ENCODE measurements at regions of chr3 and their contacts with region 1.

Region 1: GRCh38 chr3:52845691-52846431 is 11.0 kb upstream of the MUSTN1 start:
- DNase-seq: peak in 1 of 2 donors; percentile 41
- ATAC-seq: peak in 5 of 8 donors; percentile 11 to 53 (median 25)
- H3K4me3 ChIP-seq: peak overlapping the region in 4 of 10 donors; percentile 7 to 15 (median 12)
- H3K27ac ChIP-seq: peak overlapping the region; percentile 48 to 84 (median 73)
- H3K4me1 ChIP-seq: peaks cover 22 to 64% (median 47%) of the 10 kb centered on the region in 9 donors
- H3K27me3 ChIP-seq: no peaks in the 10 kb centered on the region
- CTCF ChIP-seq: peak; percentile 6 to 61 (median 51)

Region 2: DNA sequence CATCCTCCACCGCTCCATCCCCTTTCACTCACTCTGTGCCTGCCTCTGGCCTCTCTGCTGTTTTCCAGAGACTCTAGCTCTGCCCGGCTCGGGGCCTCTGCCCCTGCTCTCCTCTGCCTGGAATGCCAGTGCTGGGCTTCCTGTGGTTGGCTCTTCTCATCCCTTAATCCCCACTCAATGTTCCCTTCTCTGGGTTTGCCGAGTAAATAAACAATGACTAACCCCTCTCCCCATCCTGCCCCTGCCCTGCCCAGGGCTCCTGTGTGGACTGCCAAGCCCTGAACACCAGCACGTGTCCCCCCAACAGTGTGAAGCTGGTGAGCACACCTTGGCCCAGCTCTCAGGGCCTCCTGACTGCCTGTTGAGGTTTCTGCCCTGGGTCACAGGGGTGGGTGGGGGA is 338.5 kb before region 1 on chr3:
- intact Hi-C with region 1: no loop called
- DNase-seq: no peak
- ATAC-seq: no peak
- H3K4me3 ChIP-seq: no peak overlapping the region
- H3K27ac ChIP-seq: no peak overlapping the region
- H3K4me1 ChIP-seq: no peaks in the 10 kb centered on the region
- H3K27me3 ChIP-seq: no peaks in the 10 kb centered on the region
- CTCF ChIP-seq: no peak

Region 3: DNA sequence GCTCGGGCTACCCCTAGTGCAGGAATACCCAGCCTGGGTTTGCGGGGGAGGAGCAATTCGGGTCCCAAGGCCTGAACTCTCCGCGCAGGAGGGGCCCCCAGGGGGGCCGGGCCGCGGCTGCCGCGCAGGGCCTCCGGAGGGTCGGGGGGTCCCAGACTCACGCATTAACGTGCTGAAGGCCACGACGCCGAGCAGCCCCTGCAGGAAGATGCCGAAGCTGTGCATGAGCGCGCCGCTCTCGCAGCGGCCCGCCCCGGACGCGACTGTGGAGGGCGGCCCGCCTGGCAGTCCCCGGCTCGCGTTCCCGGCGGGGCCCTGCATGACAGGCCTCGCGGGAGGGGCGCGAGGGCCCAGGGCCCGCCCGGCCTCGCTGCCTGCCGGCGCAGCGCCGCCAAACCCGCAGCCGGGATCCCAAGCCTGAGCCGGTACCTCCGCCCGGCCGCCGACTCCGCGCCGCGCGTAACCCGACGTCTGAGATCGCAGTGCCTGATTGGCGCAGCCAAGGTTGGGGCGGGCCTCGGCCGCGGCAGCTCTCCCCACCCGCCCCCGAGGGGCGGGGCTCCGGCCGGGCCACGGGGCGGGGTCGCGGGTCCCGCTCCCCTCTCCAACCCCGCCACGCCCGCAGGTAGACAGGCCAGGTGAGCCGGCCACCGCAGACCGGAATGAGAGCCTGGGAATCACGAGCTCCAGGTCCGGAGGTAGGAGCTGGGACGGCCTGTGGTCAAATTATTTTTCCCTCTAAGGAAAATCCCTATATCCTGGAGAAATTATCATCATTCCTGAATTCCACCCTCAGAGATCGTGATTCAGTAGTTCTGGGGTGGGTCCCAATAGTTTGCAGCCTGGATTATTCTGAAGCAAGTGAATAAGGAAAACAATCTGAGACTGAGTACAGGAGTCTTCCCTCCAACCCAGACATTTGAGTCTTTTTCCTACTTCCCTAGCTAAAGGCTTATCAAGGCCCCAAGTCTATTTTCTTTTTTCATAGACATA is 51.6 kb after region 1 on chr3 and contains the start of gene STIMATE:
- intact Hi-C with region 1: loop called in 3 of 10 experiments (anchors 5 to 10 kb)
- DNase-seq: peak; percentile 88 to 90
- ATAC-seq: peak; percentile 97 to 99 (median 98)
- H3K4me3 ChIP-seq: peak within 1 kb of the TSS; percentile 33 to 98 (median 90)
- H3K27ac ChIP-seq: peak within 1 kb of the TSS in 9 of 10 donors; percentile 47 to 79 (median 70)
- H3K4me1 ChIP-seq: peaks cover 8 to 53% (median 46%) of the 10 kb centered on the region in 9 donors
- H3K27me3 ChIP-seq: no peaks in the 10 kb centered on the region
- CTCF ChIP-seq: peak in 2 of 9 donors; percentile 19 to 21
- total RNA-seq, gene STIMATE: 4.0 to 9.7 (median 7.3) TPM